Cardiac septum (tissue), 1 donor: ENCODE measurements at regions of chr1 and their contacts with region 1.

Region 1: GRCh38 chr1:92960395-92961130 is 699 bp downstream of the DIPK1A start:
- DNase-seq: peak; percentile 79

Region 2: DNA sequence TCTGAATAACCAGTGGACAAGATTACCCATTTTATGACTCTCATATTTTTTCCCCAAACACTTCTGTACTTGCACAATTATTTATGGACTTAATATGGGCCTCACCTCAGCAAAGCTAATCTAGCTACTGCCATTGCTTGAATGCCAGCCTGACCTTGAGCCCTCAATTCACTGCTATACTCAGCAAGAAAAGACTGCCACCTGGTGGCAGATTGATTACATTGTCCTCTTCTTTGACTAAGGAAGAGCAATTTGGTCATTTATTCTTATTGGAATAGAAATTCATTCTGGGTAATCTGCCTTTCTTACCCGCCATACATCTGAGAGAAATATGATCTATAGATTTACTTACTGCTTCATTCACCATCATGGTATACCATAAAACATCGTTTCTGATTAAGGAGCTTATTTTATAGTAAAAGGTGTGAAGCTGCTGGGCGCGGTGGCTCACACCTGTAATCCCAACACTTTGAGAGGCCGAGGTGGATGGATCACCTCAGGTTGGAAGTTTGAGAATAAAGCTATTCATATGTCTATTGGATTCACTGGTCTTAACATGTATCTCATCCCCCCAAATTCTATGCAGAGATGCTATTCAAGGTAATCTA is 33.6 kb after region 1 on chr1:
- intact Hi-C with region 1: loop called (anchors 2 kb)
- DNase-seq: no peak

Region 3: DNA sequence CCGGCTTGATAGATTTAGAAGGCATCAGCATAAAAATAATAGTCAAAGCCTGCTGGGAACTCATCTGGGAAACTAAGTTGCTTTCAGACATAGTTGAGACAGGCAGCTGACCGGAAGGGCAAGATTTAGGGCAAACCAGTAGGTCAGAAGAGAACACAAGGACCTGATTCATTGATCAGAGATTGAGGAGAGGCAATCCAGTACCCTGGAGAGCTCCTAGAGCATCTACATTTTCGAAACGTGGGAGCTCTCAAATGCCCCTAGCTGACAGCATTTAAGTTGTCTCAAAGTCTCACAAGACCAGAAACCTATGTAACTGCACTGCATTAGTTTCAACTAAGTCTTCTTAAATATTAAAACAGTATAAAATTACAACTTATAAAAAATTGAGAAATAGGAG is 95.7 kb after region 1 on chr1:
- intact Hi-C with region 1: no loop called
- DNase-seq: no peak